ENCODE measurements at regions of chr3 and their contacts with region 1.

Region 1: GRCh38 chr3:51670823-51671733 is at the start of gene TEX264:
- DNase-seq: peak; percentile 85 to 99 (median 95)
- ATAC-seq: peak; percentile 78
- H3K4me3 ChIP-seq: peak within 1 kb of the TSS; percentile 95 to 99
- H3K4me3 Mint-ChIP-seq: peak within 1 kb of the TSS; percentile 89
- H3K27ac ChIP-seq: peak within 1 kb of the TSS; percentile 67 to 92
- H3K27ac Mint-ChIP-seq: peak within 1 kb of the TSS; percentile 88
- H3K4me1 ChIP-seq: peaks cover 58% of the 10 kb centered on the region
- H3K4me1 Mint-ChIP-seq: peaks cover 63% of the 10 kb centered on the region
- H3K27me3 ChIP-seq: no peaks in the 10 kb centered on the region
- H3K27me3 Mint-ChIP-seq: no peaks in the 10 kb centered on the region
- CTCF ChIP-seq: no peak
- total RNA-seq, gene TEX264: 18.7 to 21.0 TPM

Region 2: GRCh38 chr3:50365080-50365841 is 1305.8 kb before region 1 on chr3:
- CTCF ChIA-PET with region 1: no interaction called
- POLR2A ChIA-PET with region 1: no interaction called
- intact Hi-C with region 1: loop called in 1 of 2 experiments (anchors 10 kb)
- DNase-seq: peak; percentile 89 to 98 (median 94)
- ATAC-seq: peak; percentile 95
- H3K4me3 ChIP-seq: peak overlapping the region; percentile 68 to 81
- H3K4me3 Mint-ChIP-seq: peak overlapping the region; percentile 87
- H3K27ac ChIP-seq: peak overlapping the region; percentile 91 to 92
- H3K27ac Mint-ChIP-seq: peak overlapping the region; percentile 95
- H3K4me1 ChIP-seq: peaks cover 20% of the 10 kb centered on the region
- H3K4me1 Mint-ChIP-seq: peaks cover 35% of the 10 kb centered on the region
- H3K27me3 ChIP-seq: no peaks in the 10 kb centered on the region
- H3K27me3 Mint-ChIP-seq: no peaks in the 10 kb centered on the region
- CTCF ChIP-seq: no peak

Region 3: GRCh38 chr3:50503504-50504342 is 1167.4 kb before region 1 on chr3 and contains the start of gene CACNA2D2:
- CTCF ChIA-PET with region 1: no interaction called
- POLR2A ChIA-PET with region 1: no interaction called
- intact Hi-C with region 1: loop called in 1 of 2 experiments (anchors 5 kb)
- DNase-seq: peak; percentile 45 to 88 (median 74)
- ATAC-seq: peak; percentile 93
- H3K4me3 ChIP-seq: peak within 1 kb of the TSS; percentile 49 to 52
- H3K4me3 Mint-ChIP-seq: peak within 1 kb of the TSS; percentile 79
- H3K27ac ChIP-seq: peak within 1 kb of the TSS in 1 of 2 experiments; percentile 7
- H3K27ac Mint-ChIP-seq: peak within 1 kb of the TSS; percentile 13
- H3K4me1 ChIP-seq: peaks cover 17% of the 10 kb centered on the region
- H3K4me1 Mint-ChIP-seq: peaks cover 10% of the 10 kb centered on the region
- H3K27me3 ChIP-seq: no peaks in the 10 kb centered on the region
- H3K27me3 Mint-ChIP-seq: peaks cover 5% of the 10 kb centered on the region
- CTCF ChIP-seq: no peak
- total RNA-seq, gene CACNA2D2: 7.2 to 8.7 TPM

Region 4: GRCh38 chr3:51384726-51385473 is 286.2 kb before region 1 on chr3 and contains the start of gene MANF:
- CTCF ChIA-PET with region 1: interaction called, 6 read pairs
- POLR2A ChIA-PET with region 1: interaction called, 4 read pairs
- intact Hi-C with region 1: loop called in 1 of 2 experiments (anchors 1 kb)
- DNase-seq: peak; percentile 94 to 99 (median 97)
- ATAC-seq: peak; percentile 93
- H3K4me3 ChIP-seq: peak within 1 kb of the TSS; percentile 86 to 94
- H3K4me3 Mint-ChIP-seq: peak within 1 kb of the TSS; percentile 99
- H3K27ac ChIP-seq: peak within 1 kb of the TSS; percentile 90 to 93
- H3K27ac Mint-ChIP-seq: peak within 1 kb of the TSS; percentile 100
- H3K4me1 ChIP-seq: peaks cover 35% of the 10 kb centered on the region
- H3K4me1 Mint-ChIP-seq: peaks cover 44% of the 10 kb centered on the region
- H3K27me3 ChIP-seq: no peaks in the 10 kb centered on the region
- H3K27me3 Mint-ChIP-seq: no peaks in the 10 kb centered on the region
- CTCF ChIP-seq: no peak
- total RNA-seq, gene MANF: 32.2 to 35.0 TPM

Region 5: GRCh38 chr3:51538459-51539290 is 132.4 kb before region 1 on chr3 and contains the start of gene RAD54L2:
- CTCF ChIA-PET with region 1: interaction called, 3 read pairs
- POLR2A ChIA-PET with region 1: interaction called, 4 read pairs
- intact Hi-C with region 1: loop called in 1 of 2 experiments (anchors 2 kb)
- DNase-seq: peak; percentile 53 to 90 (median 78)
- ATAC-seq: peak; percentile 93
- H3K4me3 ChIP-seq: peak within 1 kb of the TSS; percentile 76 to 91
- H3K4me3 Mint-ChIP-seq: peak within 1 kb of the TSS; percentile 93
- H3K27ac ChIP-seq: peak within 1 kb of the TSS; percentile 67 to 76
- H3K27ac Mint-ChIP-seq: peak within 1 kb of the TSS; percentile 92
- H3K4me1 ChIP-seq: peaks cover 25% of the 10 kb centered on the region
- H3K4me1 Mint-ChIP-seq: peaks cover 43% of the 10 kb centered on the region
- H3K27me3 ChIP-seq: no peaks in the 10 kb centered on the region
- H3K27me3 Mint-ChIP-seq: no peaks in the 10 kb centered on the region
- CTCF ChIP-seq: peak; percentile 33
- total RNA-seq, gene RAD54L2: 34.8 to 37.4 TPM

Region 6: GRCh38 chr3:51637941-51638471 is 33.1 kb before region 1 on chr3:
- CTCF ChIA-PET with region 1: interaction called, 14 read pairs
- POLR2A ChIA-PET with region 1: no interaction called
- intact Hi-C with region 1: loop called in 1 of 2 experiments (anchors 2 kb)
- DNase-seq: peak in 3 of 9 experiments; percentile 27 to 50 (median 35)
- ATAC-seq: peak; percentile 73
- H3K4me3 ChIP-seq: no peak overlapping the region
- H3K4me3 Mint-ChIP-seq: no peak overlapping the region
- H3K27ac ChIP-seq: no peak overlapping the region
- H3K27ac Mint-ChIP-seq: no peak overlapping the region
- H3K4me1 ChIP-seq: no peaks in the 10 kb centered on the region
- H3K4me1 Mint-ChIP-seq: no peaks in the 10 kb centered on the region
- H3K27me3 ChIP-seq: no peaks in the 10 kb centered on the region
- H3K27me3 Mint-ChIP-seq: no peaks in the 10 kb centered on the region
- CTCF ChIP-seq: peak; percentile 25

Region 7: GRCh38 chr3:51657234-51657633 is 13.8 kb before region 1 on chr3:
- CTCF ChIA-PET with region 1: interaction called, 12 read pairs
- POLR2A ChIA-PET with region 1: interaction called, 3 read pairs
- intact Hi-C with region 1: no loop called
- DNase-seq: no peak
- ATAC-seq: no peak
- H3K4me3 ChIP-seq: no peak overlapping the region
- H3K4me3 Mint-ChIP-seq: no peak overlapping the region
- H3K27ac ChIP-seq: no peak overlapping the region
- H3K27ac Mint-ChIP-seq: no peak overlapping the region
- H3K4me1 ChIP-seq: no peaks in the 10 kb centered on the region
- H3K4me1 Mint-ChIP-seq: no peaks in the 10 kb centered on the region
- H3K27me3 ChIP-seq: no peaks in the 10 kb centered on the region
- H3K27me3 Mint-ChIP-seq: no peaks in the 10 kb centered on the region
- CTCF ChIP-seq: no peak

Region 8: DNA sequence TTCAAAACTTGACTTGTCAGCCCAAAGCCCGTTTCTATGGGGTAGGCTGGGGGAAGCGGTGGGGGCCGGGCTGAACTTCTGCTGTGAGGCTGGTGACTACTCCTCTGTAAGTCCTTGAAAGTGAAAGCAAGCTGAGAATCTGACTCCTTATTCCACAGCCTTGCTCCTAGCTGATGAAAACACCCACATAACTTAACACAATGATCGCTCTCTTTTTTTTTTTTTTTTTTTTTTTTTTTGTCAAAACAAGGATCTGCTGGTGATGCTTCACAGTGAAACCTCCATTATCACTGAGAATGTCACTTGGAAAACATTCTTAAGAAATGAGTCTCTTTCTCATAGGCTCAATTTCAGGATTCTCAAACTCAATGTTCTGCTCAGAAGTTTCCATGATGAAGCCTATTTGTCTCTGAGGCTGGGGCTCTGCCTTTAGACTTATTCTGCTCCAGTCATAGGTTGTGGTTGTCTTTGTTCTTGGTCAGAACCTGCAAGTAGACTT is 1616.1 kb after region 1 on chr3:
- CTCF ChIA-PET with region 1: no interaction called
- POLR2A ChIA-PET with region 1: no interaction called
- intact Hi-C with region 1: no loop called
- DNase-seq: no peak
- ATAC-seq: no peak
- H3K4me3 ChIP-seq: no peak overlapping the region
- H3K4me3 Mint-ChIP-seq: no peak overlapping the region
- H3K27ac ChIP-seq: no peak overlapping the region
- H3K27ac Mint-ChIP-seq: no peak overlapping the region
- H3K4me1 ChIP-seq: no peaks in the 10 kb centered on the region
- H3K4me1 Mint-ChIP-seq: no peaks in the 10 kb centered on the region
- H3K27me3 ChIP-seq: no peaks in the 10 kb centered on the region
- H3K27me3 Mint-ChIP-seq: no peaks in the 10 kb centered on the region
- CTCF ChIP-seq: no peak

Measured in CD8-positive, alpha-beta T cell (primary cell).